CD8-positive, alpha-beta T cell (primary cell): ENCODE measurements at regions of chr3 and their contacts with region 1.

Region 1: DNA sequence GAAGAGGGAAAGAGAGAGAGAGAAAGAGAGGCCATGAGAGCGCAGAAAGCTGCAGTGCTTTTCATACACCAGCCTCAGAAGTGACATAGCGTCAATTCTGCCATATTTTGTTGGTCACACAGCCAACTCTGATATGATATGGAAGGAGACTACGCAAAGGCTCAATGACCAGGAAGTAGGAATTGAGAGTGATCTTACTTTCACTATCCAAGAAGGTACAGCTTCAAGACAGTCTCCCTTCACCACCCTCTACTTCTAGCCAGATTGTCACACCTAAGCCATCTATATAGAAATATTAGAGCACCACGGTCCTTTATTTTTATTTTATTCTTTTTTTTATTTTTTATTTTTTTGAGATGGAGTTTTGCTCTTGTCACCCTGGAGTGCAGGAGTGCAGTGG is 21.1 kb downstream of the PARP15 start:
- DNase-seq: no peak
- ATAC-seq: no peak
- H3K4me3 ChIP-seq: no peak overlapping the region
- H3K4me3 Mint-ChIP-seq: no peak overlapping the region
- H3K27ac ChIP-seq: no peak overlapping the region
- H3K27ac Mint-ChIP-seq: no peak overlapping the region
- H3K4me1 ChIP-seq: no peaks in the 10 kb centered on the region
- H3K4me1 Mint-ChIP-seq: peaks cover 12% of the 10 kb centered on the region
- H3K27me3 ChIP-seq: no peaks in the 10 kb centered on the region
- H3K27me3 Mint-ChIP-seq: no peaks in the 10 kb centered on the region
- CTCF ChIP-seq: no peak

Region 2: GRCh38 chr3:122661633-122662032 is 63.1 kb after region 1 on chr3:
- CTCF ChIA-PET with region 1: no interaction called
- POLR2A ChIA-PET with region 1: no interaction called
- intact Hi-C with region 1: loop called in 1 of 2 experiments (anchors 5 kb)
- DNase-seq: peak in 1 of 9 experiments; percentile 17
- ATAC-seq: no peak
- H3K4me3 ChIP-seq: peak overlapping the region in 1 of 2 experiments; percentile 15
- H3K4me3 Mint-ChIP-seq: no peak overlapping the region
- H3K27ac ChIP-seq: no peak overlapping the region
- H3K27ac Mint-ChIP-seq: no peak overlapping the region
- H3K4me1 ChIP-seq: no peaks in the 10 kb centered on the region
- H3K4me1 Mint-ChIP-seq: peaks cover 2% of the 10 kb centered on the region
- H3K27me3 ChIP-seq: no peaks in the 10 kb centered on the region
- H3K27me3 Mint-ChIP-seq: no peaks in the 10 kb centered on the region
- CTCF ChIP-seq: no peak